ENCODE measurements at regions of chr12 and their contacts with region 1.

Region 1: GRCh38 chr12:123106628-123107359 is 44.1 kb downstream of the PITPNM2 start:
- DNase-seq: peak in 8 of 9 experiments; percentile 48 to 81 (median 60)
- ATAC-seq: peak; percentile 86
- H3K4me3 ChIP-seq: peak overlapping the region; percentile 0 to 26
- H3K4me3 Mint-ChIP-seq: peak overlapping the region; percentile 66
- H3K27ac ChIP-seq: peak overlapping the region; percentile 52 to 82
- H3K27ac Mint-ChIP-seq: peak overlapping the region; percentile 98
- H3K4me1 ChIP-seq: peaks cover 53% of the 10 kb centered on the region
- H3K4me1 Mint-ChIP-seq: peaks cover 72% of the 10 kb centered on the region
- H3K27me3 ChIP-seq: no peaks in the 10 kb centered on the region
- H3K27me3 Mint-ChIP-seq: no peaks in the 10 kb centered on the region
- CTCF ChIP-seq: no peak

Region 2: GRCh38 chr12:123120452-123121166 is 13.8 kb after region 1 on chr12:
- CTCF ChIA-PET with region 1: interaction called, 8 read pairs
- POLR2A ChIA-PET with region 1: interaction called, 8 read pairs
- intact Hi-C with region 1: loop called in 1 of 2 experiments (anchors 2 kb)
- DNase-seq: peak in 6 of 9 experiments; percentile 23 to 72 (median 36)
- ATAC-seq: peak; percentile 48
- H3K4me3 ChIP-seq: peak overlapping the region in 1 of 2 experiments; percentile 20
- H3K4me3 Mint-ChIP-seq: peak overlapping the region; percentile 60
- H3K27ac ChIP-seq: peak overlapping the region; percentile 58 to 72
- H3K27ac Mint-ChIP-seq: peak overlapping the region; percentile 98
- H3K4me1 ChIP-seq: peaks cover 51% of the 10 kb centered on the region
- H3K4me1 Mint-ChIP-seq: peaks cover 66% of the 10 kb centered on the region
- H3K27me3 ChIP-seq: no peaks in the 10 kb centered on the region
- H3K27me3 Mint-ChIP-seq: no peaks in the 10 kb centered on the region
- CTCF ChIP-seq: no peak